ENCODE measurements at regions of chr10 and their contacts with region 1.

Region 1: DNA sequence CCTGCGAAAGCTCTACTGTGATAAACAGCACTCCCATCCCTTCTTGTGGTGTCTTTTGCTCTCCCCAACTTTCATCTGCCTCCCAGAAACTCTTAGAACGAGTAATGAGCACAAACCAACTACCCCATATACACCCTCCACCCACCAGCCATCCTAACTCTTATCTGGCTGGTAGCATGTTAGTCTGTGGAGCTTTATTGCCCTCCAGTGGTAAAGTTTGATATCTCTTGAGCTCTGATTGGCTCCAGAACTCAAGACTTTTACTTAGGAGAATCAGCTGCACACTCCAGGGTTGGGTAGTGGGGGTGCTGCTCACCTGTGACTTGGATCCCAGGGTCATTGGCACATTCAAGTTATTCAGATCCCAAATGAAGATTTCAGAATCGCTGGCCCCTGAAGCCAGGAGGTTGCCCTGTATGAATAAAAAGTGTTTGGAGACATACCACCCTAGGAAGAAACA is 10.9 kb downstream of the SEC31B start:
- DNase-seq: peak in 8 of 9 donors; percentile 39 to 80 (median 72)
- ATAC-seq: peak; percentile 69
- H3K4me3 ChIP-seq: peak overlapping the region; percentile 21
- H3K4me3 Mint-ChIP-seq: peak overlapping the region; percentile 21 to 91 (median 71)
- H3K27ac ChIP-seq: peak overlapping the region; percentile 47
- H3K27ac Mint-ChIP-seq: peak overlapping the region; percentile 53 to 94 (median 91)
- H3K4me1 ChIP-seq: peaks cover 50 to 59% of the 10 kb centered on the region in 2 donors
- H3K4me1 Mint-ChIP-seq: peaks cover 43 to 88% (median 70%) of the 10 kb centered on the region in 7 donors
- H3K27me3 ChIP-seq: no peaks in the 10 kb centered on the region
- H3K27me3 Mint-ChIP-seq: no peaks in the 10 kb centered on the region

Region 2: DNA sequence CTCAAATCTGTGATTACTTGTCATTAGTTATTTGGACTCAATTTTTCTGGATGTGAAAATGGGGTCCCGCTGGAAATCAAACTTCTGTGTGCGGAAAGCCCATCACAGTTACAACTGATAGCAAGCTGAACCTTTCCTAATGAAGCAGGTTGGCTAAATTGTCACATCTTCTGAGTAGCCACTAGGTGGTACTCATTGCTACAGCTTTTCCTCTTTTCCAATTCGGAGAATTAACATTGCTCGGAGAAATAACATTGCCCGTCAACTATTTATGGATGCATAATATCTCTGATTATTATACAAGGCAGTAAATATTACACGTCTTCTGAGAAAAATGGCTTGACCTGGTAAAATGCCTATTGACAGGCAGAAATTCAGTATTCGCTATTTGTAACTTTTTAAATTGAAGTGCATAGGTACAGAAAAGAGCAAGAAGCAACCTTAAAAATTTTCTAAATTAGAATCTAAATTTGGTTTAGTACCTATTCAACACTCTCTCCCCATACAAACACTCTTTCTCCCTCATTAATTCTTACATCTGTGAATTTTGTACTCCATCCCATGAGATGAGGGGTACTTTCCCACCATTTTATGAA is 204.9 kb before region 1 on chr10:
- CTCF ChIA-PET with region 1: interaction called, 3 read pairs
- POLR2A ChIA-PET with region 1: no interaction called
- intact Hi-C with region 1: loop called in 1 of 2 experiments (anchors 1 kb)
- DNase-seq: no peak
- ATAC-seq: peak; percentile 47
- H3K4me3 ChIP-seq: no peak overlapping the region
- H3K4me3 Mint-ChIP-seq: no peak overlapping the region
- H3K27ac ChIP-seq: no peak overlapping the region
- H3K27ac Mint-ChIP-seq: no peak overlapping the region
- H3K4me1 ChIP-seq: no peaks in the 10 kb centered on the region
- H3K4me1 Mint-ChIP-seq: no peaks in the 10 kb centered on the region
- H3K27me3 ChIP-seq: peaks cover 0 to 4% of the 10 kb centered on the region in 2 donors
- H3K27me3 Mint-ChIP-seq: peaks cover 13 to 65% (median 52%) of the 10 kb centered on the region in 5 donors

Region 3: DNA sequence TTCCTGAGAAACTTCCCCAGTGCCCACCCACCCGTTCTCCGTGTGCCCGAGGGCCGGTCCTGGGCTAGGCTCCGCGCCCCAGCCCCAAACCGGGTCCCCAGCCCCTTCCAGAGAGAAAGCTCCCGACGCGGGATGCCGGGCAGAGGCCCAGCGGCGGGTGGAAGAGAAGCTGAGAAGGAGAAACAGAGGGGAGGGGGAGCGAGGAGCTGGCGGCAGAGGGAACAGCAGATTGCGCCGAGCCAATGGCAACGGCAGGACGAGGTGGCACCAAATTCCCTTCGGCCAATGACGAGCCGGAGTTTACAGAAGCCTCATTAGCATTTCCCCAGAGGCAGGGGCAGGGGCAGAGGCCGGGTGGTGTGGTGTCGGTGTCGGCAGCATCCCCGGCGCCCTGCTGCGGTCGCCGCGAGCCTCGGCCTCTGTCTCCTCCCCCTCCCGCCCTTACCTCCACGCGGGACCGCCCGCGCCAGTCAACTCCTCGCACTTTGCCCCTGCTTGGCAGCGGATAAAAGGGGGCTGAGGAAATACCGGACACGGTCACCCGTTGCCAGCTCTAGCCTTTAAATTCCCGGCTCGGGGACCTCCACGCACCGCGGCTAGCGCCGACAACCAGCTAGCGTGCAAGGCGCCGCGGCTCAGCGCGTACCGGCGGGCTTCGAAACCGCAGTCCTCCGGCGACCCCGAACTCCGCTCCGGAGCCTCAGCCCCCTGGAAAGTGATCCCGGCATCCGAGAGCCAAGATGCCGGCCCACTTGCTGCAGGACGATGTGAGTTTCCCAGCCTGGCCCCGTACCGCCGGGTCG is 161.8 kb before region 1 on chr10 and contains the start of gene SCD:
- CTCF ChIA-PET with region 1: interaction called, 6 read pairs
- POLR2A ChIA-PET with region 1: no interaction called
- intact Hi-C with region 1: loop called in 1 of 2 experiments (anchors 1 kb)
- DNase-seq: peak; percentile 41 to 86 (median 58)
- ATAC-seq: peak; percentile 93
- H3K4me3 ChIP-seq: peak within 1 kb of the TSS; percentile 67
- H3K4me3 Mint-ChIP-seq: peak within 1 kb of the TSS; percentile 84 to 98 (median 90)
- H3K27ac ChIP-seq: peak within 1 kb of the TSS; percentile 48
- H3K27ac Mint-ChIP-seq: peak within 1 kb of the TSS in 8 of 9 donors; percentile 19 to 87 (median 68)
- H3K4me1 ChIP-seq: peaks cover 5 to 10% of the 10 kb centered on the region in 2 donors
- H3K4me1 Mint-ChIP-seq: peaks cover 15 to 69% (median 27%) of the 10 kb centered on the region in 7 donors
- H3K27me3 ChIP-seq: no peaks in the 10 kb centered on the region
- H3K27me3 Mint-ChIP-seq: peaks cover 0 to 8% (median 0%) of the 10 kb centered on the region in 5 donors
- total RNA-seq, gene SCD: 1.1 to 121 (median 2.3) TPM

Region 4: GRCh38 chr10:100433253-100434240 is 75.2 kb before region 1 on chr10:
- CTCF ChIA-PET with region 1: interaction called, 30 read pairs
- POLR2A ChIA-PET with region 1: no interaction called
- intact Hi-C with region 1: loop called in 1 of 2 experiments (anchors 1 kb)
- DNase-seq: peak; percentile 84 to 96 (median 92)
- ATAC-seq: peak; percentile 100
- H3K4me3 ChIP-seq: no peak overlapping the region
- H3K4me3 Mint-ChIP-seq: no peak overlapping the region
- H3K27ac ChIP-seq: no peak overlapping the region
- H3K27ac Mint-ChIP-seq: peak overlapping the region in 1 of 9 donors; percentile 9
- H3K4me1 ChIP-seq: no peaks in the 10 kb centered on the region
- H3K4me1 Mint-ChIP-seq: peaks cover 0 to 18% (median 0%) of the 10 kb centered on the region in 7 donors
- H3K27me3 ChIP-seq: no peaks in the 10 kb centered on the region
- H3K27me3 Mint-ChIP-seq: no peaks in the 10 kb centered on the region

Region 5: DNA sequence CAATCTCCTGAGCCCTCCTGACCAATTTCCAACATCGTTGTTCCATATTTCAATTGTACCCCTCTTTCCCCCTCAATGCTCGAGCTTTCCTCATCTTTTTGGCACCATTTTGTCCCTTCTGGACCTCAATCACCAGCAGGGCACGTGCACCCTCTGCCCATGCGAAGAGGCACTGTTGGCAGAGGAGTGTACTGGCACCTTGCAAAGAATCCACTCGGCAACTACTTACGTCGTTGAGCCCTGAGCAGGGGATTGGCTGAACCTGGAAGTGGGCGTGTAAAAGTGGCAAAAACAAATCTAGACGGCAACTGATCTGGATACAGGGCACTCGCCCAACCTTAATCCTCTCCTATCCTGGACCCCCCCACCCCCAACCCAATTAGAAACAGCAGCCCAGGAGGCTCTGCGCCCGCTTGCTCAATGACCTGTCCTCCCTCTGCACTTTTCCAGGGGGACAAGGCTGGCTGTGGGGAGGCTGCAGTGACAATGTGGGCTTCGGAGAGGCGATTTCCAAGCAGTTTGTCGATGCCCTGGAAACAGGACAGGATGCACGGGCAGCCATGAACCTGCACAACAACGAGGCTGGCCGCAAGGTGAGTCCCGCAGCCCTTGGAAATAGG is 27.1 kb before region 1 on chr10:
- CTCF ChIA-PET with region 1: interaction called, 51 read pairs
- POLR2A ChIA-PET with region 1: interaction called, 4 read pairs
- intact Hi-C with region 1: loop called (anchors 1 kb)
- DNase-seq: peak; percentile 86 to 97 (median 90)
- ATAC-seq: peak; percentile 98
- H3K4me3 ChIP-seq: peak overlapping the region; percentile 70
- H3K4me3 Mint-ChIP-seq: peak overlapping the region; percentile 63 to 92 (median 86)
- H3K27ac ChIP-seq: no peak overlapping the region
- H3K27ac Mint-ChIP-seq: peak overlapping the region in 5 of 9 donors; percentile 1 to 76 (median 66)
- H3K4me1 ChIP-seq: peaks cover 0 to 4% of the 10 kb centered on the region in 2 donors
- H3K4me1 Mint-ChIP-seq: peaks cover 10 to 35% (median 12%) of the 10 kb centered on the region in 7 donors
- H3K27me3 ChIP-seq: no peaks in the 10 kb centered on the region
- H3K27me3 Mint-ChIP-seq: peaks cover 4 to 31% (median 26%) of the 10 kb centered on the region in 5 donors

Region 6: DNA sequence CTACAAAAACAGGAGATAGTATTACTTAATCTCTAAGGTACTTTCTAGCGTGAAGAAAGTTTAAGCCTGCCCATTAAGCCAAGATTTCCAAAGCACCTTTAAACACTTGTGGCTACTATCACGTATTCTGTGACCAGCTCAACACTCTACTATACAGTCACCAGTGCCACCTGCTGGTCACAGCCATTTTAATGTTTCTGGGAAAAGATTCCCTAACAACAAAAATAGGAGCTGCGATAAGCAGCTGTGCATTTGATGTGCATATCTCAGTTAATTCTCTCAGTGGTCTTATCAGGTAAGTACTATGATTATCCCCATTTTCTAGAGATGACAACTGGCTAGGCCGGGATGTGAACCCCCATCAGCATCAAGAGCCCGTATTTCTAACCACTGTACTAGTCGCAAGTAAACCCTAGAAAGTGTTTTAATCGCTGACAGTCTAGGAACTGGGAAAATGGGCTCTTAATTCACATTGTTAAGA is 10.1 kb after region 1 on chr10:
- CTCF ChIA-PET with region 1: interaction called, 39 read pairs
- POLR2A ChIA-PET with region 1: interaction called, 8 read pairs
- intact Hi-C with region 1: loop called (anchors 1 kb)
- DNase-seq: peak in 7 of 9 donors; percentile 48 to 65 (median 58)
- ATAC-seq: peak; percentile 83
- H3K4me3 ChIP-seq: no peak overlapping the region
- H3K4me3 Mint-ChIP-seq: peak overlapping the region in 1 of 10 donors; percentile 30
- H3K27ac ChIP-seq: no peak overlapping the region
- H3K27ac Mint-ChIP-seq: peak overlapping the region in 5 of 9 donors; percentile 62 to 83 (median 72)
- H3K4me1 ChIP-seq: peaks cover 0 to 10% of the 10 kb centered on the region in 2 donors
- H3K4me1 Mint-ChIP-seq: peaks cover 4 to 49% (median 16%) of the 10 kb centered on the region in 7 donors
- H3K27me3 ChIP-seq: no peaks in the 10 kb centered on the region
- H3K27me3 Mint-ChIP-seq: no peaks in the 10 kb centered on the region

Region 7: DNA sequence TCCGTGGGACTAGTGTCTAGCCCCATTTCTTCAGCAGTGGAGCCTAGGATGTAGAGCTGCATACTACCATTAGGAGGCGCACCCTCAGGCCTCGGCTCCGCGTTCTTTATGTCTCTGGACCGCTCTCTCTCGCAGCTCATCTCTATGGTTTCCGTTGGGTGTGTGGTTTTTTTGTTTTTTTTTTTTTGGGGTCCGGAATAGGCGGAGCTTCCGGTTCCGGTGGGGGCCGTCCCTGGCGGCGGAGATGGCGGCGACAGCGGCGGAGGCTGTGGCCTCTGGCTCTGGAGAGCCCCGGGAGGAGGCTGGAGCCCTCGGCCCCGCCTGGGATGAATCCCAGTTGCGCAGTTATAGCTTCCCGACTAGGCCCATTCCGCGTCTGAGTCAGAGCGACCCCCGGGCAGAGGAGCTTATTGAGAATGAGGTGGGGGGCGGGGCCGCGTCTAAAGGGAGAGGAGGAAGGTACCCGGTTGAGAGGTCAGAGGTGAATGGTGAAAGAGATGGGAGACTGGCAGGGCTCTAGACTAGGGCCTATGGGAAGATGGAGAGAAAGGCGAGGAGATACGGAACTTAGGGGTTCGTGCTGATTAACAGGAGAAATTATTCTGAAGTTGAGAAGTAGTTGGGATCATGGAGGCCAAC is 27.1 kb after region 1 on chr10 and contains the start of gene HIF1AN:
- CTCF ChIA-PET with region 1: interaction called, 5 read pairs
- POLR2A ChIA-PET with region 1: interaction called, 4 read pairs
- intact Hi-C with region 1: loop called in 1 of 2 experiments (anchors 1 kb)
- DNase-seq: peak; percentile 70 to 95 (median 91)
- ATAC-seq: peak; percentile 100
- H3K4me3 ChIP-seq: peak within 1 kb of the TSS; percentile 73
- H3K4me3 Mint-ChIP-seq: peak within 1 kb of the TSS in 1 of 10 donors; percentile 9
- H3K27ac ChIP-seq: peak within 1 kb of the TSS; percentile 85
- H3K27ac Mint-ChIP-seq: peak within 1 kb of the TSS in 1 of 9 donors; percentile 57
- H3K4me1 ChIP-seq: peaks cover 24 to 27% of the 10 kb centered on the region in 2 donors
- H3K4me1 Mint-ChIP-seq: peaks cover 0 to 29% (median 10%) of the 10 kb centered on the region in 7 donors
- H3K27me3 ChIP-seq: no peaks in the 10 kb centered on the region
- H3K27me3 Mint-ChIP-seq: no peaks in the 10 kb centered on the region
- total RNA-seq, gene HIF1AN: 43.3 to 74.9 (median 54.8) TPM

Measured in naive thymus-derived CD4-positive, alpha-beta T cell (primary cell).